Left ventricle myocardium superior (tissue), 1 donor: ENCODE measurements at regions of chr12 and their contacts with region 1.

Region 1: DNA sequence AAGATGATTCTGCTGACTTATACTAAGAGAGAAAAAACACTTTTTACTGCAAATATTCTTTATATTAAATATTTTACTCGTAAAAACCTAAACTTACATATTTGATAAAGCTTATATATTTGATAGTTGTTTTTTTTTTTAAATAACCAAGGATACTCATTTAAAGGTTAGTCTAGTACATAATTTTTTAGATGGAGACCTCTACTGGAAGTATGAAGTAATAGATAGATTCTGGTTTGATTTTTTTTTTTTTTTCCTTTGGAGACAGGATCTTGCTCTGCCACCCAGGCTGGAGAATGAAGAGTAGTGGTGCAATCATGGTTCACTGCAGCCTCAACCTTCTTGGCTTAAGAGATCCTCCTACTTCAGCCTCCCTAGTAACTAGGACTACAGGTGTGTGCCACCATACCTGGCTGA is 16.4 kb downstream of the ARID2 start:
- DNase-seq: no peak
- ATAC-seq: peak; percentile 42

Region 2: GRCh38 chr12:45543906-45544315 is 202.0 kb before region 1 on chr12:
- intact Hi-C with region 1: loop called (anchors 10 kb)
- DNase-seq: no peak
- ATAC-seq: peak; percentile 78

Region 3: GRCh38 chr12:45893240-45893639 is 147.4 kb after region 1 on chr12:
- intact Hi-C with region 1: no loop called
- DNase-seq: no peak
- ATAC-seq: no peak